ENCODE measurements at regions of chr19 and their contacts with region 1.

Region 1: GRCh38 chr19:10580979-10581631 is 6.0 kb downstream of the AP1M2 start:
- DNase-seq: peak; percentile 81 to 85 (median 83)
- ATAC-seq: peak; percentile 94 to 100 (median 98)
- H3K4me3 ChIP-seq: no peak overlapping the region
- H3K27ac ChIP-seq: no peak overlapping the region
- H3K4me1 ChIP-seq: no peaks in the 10 kb centered on the region
- H3K27me3 ChIP-seq: no peaks in the 10 kb centered on the region
- CTCF ChIP-seq: peak; percentile 90 to 99 (median 95)
- POLR2A ChIP-seq: no peak

Region 2: DNA sequence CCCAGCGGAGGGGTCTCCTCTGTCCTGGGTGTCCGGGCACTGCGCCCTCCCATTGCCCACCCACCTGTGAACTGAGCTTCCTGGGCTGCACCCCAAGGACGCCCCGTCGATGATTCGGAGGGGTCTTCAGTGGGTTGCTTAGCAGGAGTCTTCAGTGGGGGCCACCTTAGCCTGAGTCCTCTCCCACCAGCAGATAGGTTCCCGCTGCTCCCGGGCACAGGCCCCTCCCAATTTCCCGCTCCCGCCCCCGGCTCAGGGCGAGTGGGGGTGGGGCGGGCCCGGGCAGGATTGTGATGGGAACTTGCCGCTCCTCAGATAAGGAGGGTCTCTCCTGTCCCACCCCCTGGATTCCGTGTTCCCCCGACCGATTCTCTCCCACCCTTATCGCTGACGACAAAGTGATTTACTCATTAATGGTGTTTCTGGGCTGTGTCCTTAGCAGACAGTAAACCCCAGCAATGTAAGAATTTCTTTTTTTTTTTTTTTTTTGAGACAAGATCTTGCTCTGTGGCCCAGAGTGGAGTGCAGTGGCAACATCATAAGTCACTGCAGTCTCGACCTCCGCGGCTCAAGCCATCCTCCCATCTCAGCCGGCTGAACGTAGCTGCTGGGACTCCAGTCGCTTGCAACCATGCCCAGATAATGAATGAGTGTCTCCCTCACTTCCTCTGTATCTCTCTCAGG is 63.2 kb before region 1 on chr19:
- intact Hi-C with region 1: no loop called
- DNase-seq: no peak
- ATAC-seq: peak; percentile 45 to 57 (median 46)
- H3K4me3 ChIP-seq: peak overlapping the region in 2 of 3 donors; percentile 15 to 40
- H3K27ac ChIP-seq: no peak overlapping the region
- H3K4me1 ChIP-seq: peaks cover 0 to 6% (median 0%) of the 10 kb centered on the region in 4 donors
- H3K27me3 ChIP-seq: peaks cover 0 to 20% of the 10 kb centered on the region in 2 donors
- CTCF ChIP-seq: no peak
- POLR2A ChIP-seq: no peak

Region 3: DNA sequence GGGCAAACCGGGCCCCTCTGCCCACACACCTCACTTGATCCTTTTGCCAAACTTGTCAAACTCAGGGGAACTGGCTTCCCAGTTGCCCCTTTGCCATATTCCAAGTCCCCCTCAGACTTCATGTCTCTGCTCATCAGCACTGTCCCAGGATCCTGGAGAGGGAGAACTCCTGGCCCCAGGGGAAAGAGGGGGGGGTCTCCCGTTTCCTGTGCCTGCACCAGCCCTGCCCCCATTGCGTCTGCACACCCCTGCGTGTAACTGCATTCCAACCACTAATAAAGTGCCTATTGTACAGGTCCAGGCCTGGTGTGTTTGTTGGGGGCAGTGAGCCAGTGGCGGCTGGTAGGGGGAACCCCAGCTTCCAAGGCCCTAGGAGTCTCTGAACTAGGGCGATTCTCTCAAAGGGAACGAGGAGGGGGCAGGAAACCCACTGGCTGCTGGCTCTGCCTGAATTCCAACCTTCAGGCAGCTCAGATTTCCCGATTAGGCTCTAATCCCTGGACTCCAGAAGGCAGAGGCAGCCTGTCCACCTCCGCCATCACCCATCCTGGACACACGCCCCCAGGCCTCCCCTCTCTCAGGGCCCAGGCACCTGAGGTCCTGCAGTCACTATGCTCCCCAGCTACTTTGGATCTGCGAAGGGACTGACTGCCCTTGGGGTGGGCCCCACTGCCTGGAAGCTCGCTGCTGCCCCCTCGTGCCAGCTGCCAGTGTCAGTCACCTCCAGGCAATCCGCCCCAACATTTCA is 63.3 kb after region 1 on chr19:
- intact Hi-C with region 1: loop called (anchors 2 to 5 kb)
- DNase-seq: peak; percentile 84 to 85 (median 85)
- ATAC-seq: peak; percentile 93 to 95 (median 94)
- H3K4me3 ChIP-seq: no peak overlapping the region
- H3K27ac ChIP-seq: no peak overlapping the region
- H3K4me1 ChIP-seq: no peaks in the 10 kb centered on the region
- H3K27me3 ChIP-seq: no peaks in the 10 kb centered on the region
- CTCF ChIP-seq: peak; percentile 82 to 85 (median 84)
- POLR2A ChIP-seq: no peak

Region 4: DNA sequence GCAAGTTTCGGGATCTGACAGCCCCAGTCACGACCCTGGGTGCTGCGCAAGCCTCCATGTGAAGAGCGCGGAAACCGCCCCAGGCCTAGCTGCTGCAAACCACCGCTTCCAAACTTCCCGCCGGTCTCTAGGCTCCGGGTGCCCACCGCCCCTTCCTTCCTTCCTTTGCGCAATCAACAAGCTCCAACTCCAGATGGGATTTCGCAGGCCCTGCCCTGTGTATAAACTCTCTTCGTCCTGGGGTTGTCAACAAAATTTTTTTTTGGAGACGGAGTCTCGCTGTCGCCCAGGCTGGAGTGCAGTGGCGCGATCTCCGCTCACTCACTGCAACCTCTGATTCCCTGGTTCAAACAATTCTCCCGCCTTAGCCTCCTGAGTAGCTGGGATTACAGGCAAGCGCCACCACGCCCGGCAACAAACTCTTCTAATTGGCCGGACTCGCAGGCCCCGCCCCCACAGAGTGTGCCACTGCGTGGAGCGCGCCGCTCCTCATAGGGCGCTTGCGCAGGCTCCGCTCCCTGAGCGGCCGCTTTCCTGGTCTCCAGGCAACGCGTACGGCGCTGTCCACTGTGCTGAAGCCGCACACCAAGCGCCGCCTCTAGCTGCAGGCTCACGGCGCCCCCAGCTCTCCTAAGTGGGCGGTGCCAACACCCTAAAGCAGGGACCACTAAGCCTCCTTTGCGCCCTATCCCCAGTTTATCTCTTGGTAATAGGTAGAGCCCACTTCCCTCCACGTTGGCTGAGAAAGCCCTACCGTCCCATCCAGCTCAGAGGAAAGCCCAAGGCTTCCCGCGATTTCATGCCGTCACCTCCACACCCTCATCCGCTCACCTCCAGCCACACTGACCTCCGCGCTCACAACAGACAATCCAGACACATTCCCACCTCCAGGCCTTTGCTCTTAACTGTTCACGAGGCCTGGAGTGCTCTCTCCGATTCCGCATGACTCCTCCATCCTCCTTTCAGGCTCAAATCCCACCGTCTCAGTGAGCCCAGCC is 114.6 kb after region 1 on chr19:
- intact Hi-C with region 1: loop called (anchors 5 kb)
- DNase-seq: peak; percentile 95 to 96 (median 95)
- ATAC-seq: peak; percentile 98 to 100 (median 99)
- H3K4me3 ChIP-seq: peak overlapping the region in 2 of 3 donors; percentile 6 to 11
- H3K27ac ChIP-seq: no peak overlapping the region
- H3K4me1 ChIP-seq: peaks cover 0 to 6% (median 3%) of the 10 kb centered on the region in 4 donors
- H3K27me3 ChIP-seq: no peaks in the 10 kb centered on the region
- CTCF ChIP-seq: no peak
- POLR2A ChIP-seq: no peak